Activated CD4-positive, alpha-beta T cell treated with anti-CD3 and anti-CD28 coated beads for 36 hours (primary cell): ENCODE measurements at regions of chr1 and their contacts with region 1.

Region 1: GRCh38 chr1:86704458-86704971 is at the start of gene SH3GLB1:
- DNase-seq: peak; percentile 93
- ATAC-seq: peak; percentile 90
- H3K4me3 Mint-ChIP-seq: peak within 1 kb of the TSS; percentile 98
- H3K27ac Mint-ChIP-seq: peak within 1 kb of the TSS; percentile 98
- H3K4me1 Mint-ChIP-seq: peaks cover 44% of the 10 kb centered on the region
- H3K27me3 Mint-ChIP-seq: no peaks in the 10 kb centered on the region
- total RNA-seq, gene SH3GLB1: 58.0 to 64.5 TPM

Region 2: DNA sequence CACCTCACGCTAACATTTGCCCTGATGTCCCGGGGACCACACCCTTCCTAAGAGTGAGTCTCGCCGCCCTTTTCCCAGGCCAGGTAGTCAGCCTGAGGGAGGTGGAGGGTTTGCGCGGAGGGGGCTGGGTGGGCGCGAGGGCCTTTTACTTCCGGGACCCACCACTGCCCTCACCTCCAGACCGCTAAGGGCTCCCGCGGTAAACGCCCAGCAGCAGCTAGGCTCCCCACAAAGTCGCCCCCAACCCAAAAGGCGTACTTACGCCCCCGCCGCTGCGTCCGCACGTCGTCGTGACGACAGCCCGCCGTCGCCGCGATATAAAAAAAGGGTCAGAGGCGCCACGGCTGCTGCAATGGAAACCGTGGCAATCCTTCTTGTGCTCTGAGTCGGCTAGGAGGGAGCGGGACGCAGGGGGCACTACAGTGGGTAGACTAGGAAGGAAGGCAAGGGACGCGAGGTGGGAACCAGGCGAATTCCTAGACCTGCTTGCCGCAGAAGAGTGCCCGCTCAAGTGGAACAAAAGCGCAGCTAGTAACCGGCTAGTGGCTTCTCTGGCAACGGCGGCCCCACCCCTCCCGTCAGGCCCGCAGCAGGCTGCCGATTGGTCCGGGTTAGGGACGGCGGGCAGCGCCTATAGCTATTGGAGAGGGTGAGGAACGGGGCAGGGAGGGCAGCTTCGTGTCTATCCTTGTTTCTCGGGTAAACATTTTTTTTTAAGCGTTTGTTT is 308.6 kb before region 1 on chr1 and contains the start of gene ODF2L:
- CTCF ChIA-PET with region 1: interaction called, 11 read pairs
- POLR2A ChIA-PET with region 1: no interaction called
- intact Hi-C with region 1: loop called (anchors 1 kb)
- DNase-seq: peak; percentile 94
- ATAC-seq: peak; percentile 100
- H3K4me3 Mint-ChIP-seq: peak within 1 kb of the TSS; percentile 89
- H3K27ac Mint-ChIP-seq: peak within 1 kb of the TSS; percentile 88
- H3K4me1 Mint-ChIP-seq: peaks cover 41% of the 10 kb centered on the region
- H3K27me3 Mint-ChIP-seq: no peaks in the 10 kb centered on the region
- total RNA-seq, gene ODF2L: 18.8 to 27.3 TPM

Region 3: GRCh38 chr1:86596741-86597290 is 107.7 kb before region 1 on chr1:
- CTCF ChIA-PET with region 1: no interaction called
- POLR2A ChIA-PET with region 1: no interaction called
- intact Hi-C with region 1: no loop called
- DNase-seq: no peak
- ATAC-seq: no peak
- H3K4me3 Mint-ChIP-seq: no peak overlapping the region
- H3K27ac Mint-ChIP-seq: no peak overlapping the region
- H3K4me1 Mint-ChIP-seq: no peaks in the 10 kb centered on the region
- H3K27me3 Mint-ChIP-seq: peaks cover 4% of the 10 kb centered on the region

Region 4: GRCh38 chr1:86741947-86742572 is 37.5 kb after region 1 on chr1:
- CTCF ChIA-PET with region 1: interaction called, 17 read pairs
- POLR2A ChIA-PET with region 1: no interaction called
- intact Hi-C with region 1: loop called (anchors 2 kb)
- DNase-seq: peak; percentile 47
- ATAC-seq: no peak
- H3K4me3 Mint-ChIP-seq: no peak overlapping the region
- H3K27ac Mint-ChIP-seq: no peak overlapping the region
- H3K4me1 Mint-ChIP-seq: peaks cover 2% of the 10 kb centered on the region
- H3K27me3 Mint-ChIP-seq: no peaks in the 10 kb centered on the region

Region 5: GRCh38 chr1:86765073-86765472 is 60.6 kb after region 1 on chr1:
- CTCF ChIA-PET with region 1: no interaction called
- POLR2A ChIA-PET with region 1: no interaction called
- intact Hi-C with region 1: no loop called
- DNase-seq: no peak
- ATAC-seq: no peak
- H3K4me3 Mint-ChIP-seq: no peak overlapping the region
- H3K27ac Mint-ChIP-seq: no peak overlapping the region
- H3K4me1 Mint-ChIP-seq: no peaks in the 10 kb centered on the region
- H3K27me3 Mint-ChIP-seq: peaks cover 8% of the 10 kb centered on the region

Region 6: DNA sequence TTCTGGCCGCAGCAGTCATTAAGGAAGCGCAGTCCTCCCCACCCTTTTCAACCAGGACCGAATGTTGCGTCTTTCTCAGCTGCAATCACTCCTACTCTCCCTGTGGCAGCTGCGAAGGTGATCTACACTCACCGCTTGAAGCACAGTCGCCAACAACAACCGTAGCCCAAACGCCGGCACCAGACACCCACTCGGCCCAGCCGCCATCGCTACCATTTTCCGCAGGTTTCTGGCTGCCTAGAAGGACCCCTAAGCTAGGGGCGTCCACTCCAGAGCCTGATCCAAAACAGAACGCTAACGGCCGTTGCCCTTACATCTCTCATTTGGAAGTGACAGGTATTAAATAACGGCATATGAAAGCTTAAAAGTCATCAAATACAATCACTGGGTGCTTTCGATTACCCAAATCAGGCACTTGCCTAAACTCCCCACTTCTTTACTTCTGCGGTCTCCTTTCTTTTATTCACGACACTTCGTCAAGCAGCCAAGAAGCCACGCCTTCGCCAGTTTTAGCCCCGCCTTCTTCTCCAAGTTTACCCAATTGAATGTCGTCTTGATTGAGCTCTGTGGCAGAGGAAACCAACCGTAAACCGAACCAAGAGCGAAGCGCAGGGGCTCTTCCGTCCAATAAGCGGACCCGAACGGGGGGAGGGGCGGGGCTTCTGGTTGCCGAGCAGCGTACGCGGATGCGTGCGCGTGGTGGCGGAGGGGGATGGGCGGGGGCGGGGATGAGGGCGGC is 209.6 kb after region 1 on chr1 and contains the start of gene SELENOF:
- CTCF ChIA-PET with region 1: interaction called, 14 read pairs
- POLR2A ChIA-PET with region 1: no interaction called
- intact Hi-C with region 1: loop called (anchors 1 kb)
- DNase-seq: peak; percentile 99
- ATAC-seq: peak; percentile 94
- H3K4me3 Mint-ChIP-seq: no peak within 1 kb of the TSS
- H3K27ac Mint-ChIP-seq: no peak within 1 kb of the TSS
- H3K4me1 Mint-ChIP-seq: peaks cover 39% of the 10 kb centered on the region
- H3K27me3 Mint-ChIP-seq: no peaks in the 10 kb centered on the region
- total RNA-seq, gene SELENOF: 140 to 141 TPM

Region 7: GRCh38 chr1:87335175-87335884 is 630.8 kb after region 1 on chr1:
- CTCF ChIA-PET with region 1: no interaction called
- POLR2A ChIA-PET with region 1: no interaction called
- intact Hi-C with region 1: loop called in 1 of 2 experiments (anchors 10 kb)
- DNase-seq: peak; percentile 77
- ATAC-seq: peak; percentile 53
- H3K4me3 Mint-ChIP-seq: peak overlapping the region; percentile 76
- H3K27ac Mint-ChIP-seq: peak overlapping the region; percentile 96
- H3K4me1 Mint-ChIP-seq: peaks cover 60% of the 10 kb centered on the region
- H3K27me3 Mint-ChIP-seq: peaks cover 29% of the 10 kb centered on the region